MCF 10A (cell line): ENCODE measurements at regions of chr7 and their contacts with region 1.

Region 1: GRCh38 chr7:3897438-3898385 is 596.7 kb downstream of the SDK1 start:
- DNase-seq: peak; percentile 65
- H3K4me3 Mint-ChIP-seq: no peak overlapping the region
- H3K27ac Mint-ChIP-seq: peak overlapping the region; percentile 27
- H3K4me1 Mint-ChIP-seq: peaks cover 15% of the 10 kb centered on the region
- H3K27me3 Mint-ChIP-seq: no peaks in the 10 kb centered on the region
- CTCF ChIP-seq: peak; percentile 75

Region 2: GRCh38 chr7:2886900-2887299 is 1010.8 kb before region 1 on chr7:
- CTCF ChIA-PET with region 1: interaction called, 4 read pairs
- POLR2A ChIA-PET with region 1: no interaction called
- intact Hi-C with region 1: loop called (anchors 1 kb)
- DNase-seq: peak; percentile 76
- H3K4me3 Mint-ChIP-seq: no peak overlapping the region
- H3K27ac Mint-ChIP-seq: no peak overlapping the region
- H3K4me1 Mint-ChIP-seq: no peaks in the 10 kb centered on the region
- H3K27me3 Mint-ChIP-seq: no peaks in the 10 kb centered on the region
- CTCF ChIP-seq: peak; percentile 81

Region 3: GRCh38 chr7:3300651-3301378 is 596.9 kb before region 1 on chr7 and contains the start of gene SDK1:
- CTCF ChIA-PET with region 1: no interaction called
- POLR2A ChIA-PET with region 1: no interaction called
- intact Hi-C with region 1: loop called (anchors 2 kb)
- DNase-seq: peak; percentile 67
- H3K4me3 Mint-ChIP-seq: peak within 1 kb of the TSS; percentile 53
- H3K27ac Mint-ChIP-seq: no peak within 1 kb of the TSS
- H3K4me1 Mint-ChIP-seq: no peaks in the 10 kb centered on the region
- H3K27me3 Mint-ChIP-seq: peaks cover 9% of the 10 kb centered on the region
- CTCF ChIP-seq: peak; percentile 83
- total RNA-seq, gene SDK1: 1.5 and 3.3 TPM in 2 replicates

Region 4: DNA sequence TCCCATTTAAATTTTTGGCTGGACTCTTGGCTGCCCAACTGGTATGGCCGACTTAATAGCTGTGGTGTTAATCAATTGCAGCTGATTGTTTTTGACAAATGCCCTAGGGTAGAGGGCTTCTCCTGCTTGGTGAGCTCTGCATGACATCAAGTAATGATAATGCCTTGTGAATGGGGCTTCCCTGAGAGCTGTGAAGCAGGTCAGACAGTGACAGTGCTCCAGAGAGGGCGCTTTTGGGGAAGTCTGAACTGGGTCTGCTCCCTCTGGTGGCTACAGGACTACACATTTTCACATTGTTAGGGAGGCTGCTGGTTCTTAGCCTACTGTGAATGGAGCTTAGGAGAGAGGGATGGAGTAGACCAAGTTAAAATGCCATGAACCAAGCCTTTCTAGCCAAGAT is 497.9 kb before region 1 on chr7:
- CTCF ChIA-PET with region 1: no interaction called
- POLR2A ChIA-PET with region 1: no interaction called
- intact Hi-C with region 1: loop called (anchors 5 kb)
- DNase-seq: peak; percentile 47
- H3K4me3 Mint-ChIP-seq: no peak overlapping the region
- H3K27ac Mint-ChIP-seq: no peak overlapping the region
- H3K4me1 Mint-ChIP-seq: peaks cover 7% of the 10 kb centered on the region
- H3K27me3 Mint-ChIP-seq: no peaks in the 10 kb centered on the region
- CTCF ChIP-seq: no peak

Region 5: DNA sequence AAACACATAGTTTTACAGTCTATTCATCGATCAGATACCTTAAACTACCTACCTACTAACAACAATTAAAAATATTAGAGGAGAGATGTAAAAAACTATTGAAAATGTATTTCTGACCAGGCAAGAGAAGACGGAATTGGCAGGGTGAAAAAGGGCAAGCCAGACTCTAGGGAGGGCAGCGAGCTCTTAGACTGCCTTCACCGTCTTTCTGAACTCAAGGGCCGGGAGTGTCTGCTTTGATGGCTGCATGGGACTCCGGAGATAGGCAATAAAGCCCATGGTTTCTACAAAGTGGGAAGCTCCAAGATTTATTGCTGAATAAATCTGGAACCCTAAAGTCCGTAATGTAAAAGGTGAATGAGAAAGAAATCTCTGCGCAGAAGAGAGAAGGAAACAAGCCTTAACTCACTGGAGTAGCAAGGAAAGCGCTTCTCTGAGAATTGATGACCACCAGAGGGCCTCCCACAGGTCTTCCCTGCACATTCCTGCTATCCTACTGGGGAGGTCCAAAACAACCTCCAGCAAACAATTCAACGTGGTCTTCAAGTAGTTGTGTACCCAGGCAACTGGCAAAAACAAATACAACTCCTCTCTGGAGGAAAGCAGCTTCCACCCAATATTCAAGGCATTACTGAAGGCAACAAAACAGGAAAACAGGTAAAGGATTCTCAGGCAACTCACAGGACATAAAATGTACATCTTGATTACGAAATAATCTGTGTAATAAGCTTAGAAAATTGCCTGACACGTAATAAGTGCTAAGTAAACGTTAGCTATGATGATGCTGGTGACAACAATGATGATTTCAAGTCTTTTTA is 415.4 kb before region 1 on chr7:
- CTCF ChIA-PET with region 1: no interaction called
- POLR2A ChIA-PET with region 1: no interaction called
- intact Hi-C with region 1: loop called (anchors 1 kb)
- DNase-seq: peak; percentile 64
- H3K4me3 Mint-ChIP-seq: no peak overlapping the region
- H3K27ac Mint-ChIP-seq: no peak overlapping the region
- H3K4me1 Mint-ChIP-seq: peaks cover 10% of the 10 kb centered on the region
- H3K27me3 Mint-ChIP-seq: no peaks in the 10 kb centered on the region
- CTCF ChIP-seq: peak; percentile 47

Region 6: GRCh38 chr7:3695602-3696001 is 202.1 kb before region 1 on chr7:
- CTCF ChIA-PET with region 1: interaction called, 4 read pairs
- POLR2A ChIA-PET with region 1: interaction called, 3 read pairs
- intact Hi-C with region 1: loop called (anchors 1 kb)
- DNase-seq: peak; percentile 35
- H3K4me3 Mint-ChIP-seq: no peak overlapping the region
- H3K27ac Mint-ChIP-seq: no peak overlapping the region
- H3K4me1 Mint-ChIP-seq: no peaks in the 10 kb centered on the region
- H3K27me3 Mint-ChIP-seq: no peaks in the 10 kb centered on the region
- CTCF ChIP-seq: peak; percentile 22